Activated naive CD4-positive, alpha-beta T cell treated with anti-CD3 and anti-CD28 coated beads, Interleukin-2, amount 10 ng/mL, durations not matched to agents 7 days and 5 days (primary cell): ENCODE measurements at regions of chr2 and their contacts with region 1.

Region 1: GRCh38 chr2:204145263-204145751 is 208.7 kb downstream of the ICOS start:
- DNase-seq: peak; percentile 84
- H3K4me3 Mint-ChIP-seq: peak overlapping the region; percentile 75
- H3K27ac Mint-ChIP-seq: peak overlapping the region; percentile 77
- H3K4me1 Mint-ChIP-seq: peaks cover 12% of the 10 kb centered on the region
- H3K27me3 Mint-ChIP-seq: peaks cover 26% of the 10 kb centered on the region

Region 2: GRCh38 chr2:204108330-204108751 is 37.0 kb before region 1 on chr2:
- CTCF ChIA-PET with region 1: interaction called, 14 read pairs
- DNase-seq: peak; percentile 57
- H3K4me3 Mint-ChIP-seq: peak overlapping the region; percentile 59
- H3K27ac Mint-ChIP-seq: peak overlapping the region; percentile 84
- H3K4me1 Mint-ChIP-seq: peaks cover 78% of the 10 kb centered on the region
- H3K27me3 Mint-ChIP-seq: peaks cover 9% of the 10 kb centered on the region

Region 3: DNA sequence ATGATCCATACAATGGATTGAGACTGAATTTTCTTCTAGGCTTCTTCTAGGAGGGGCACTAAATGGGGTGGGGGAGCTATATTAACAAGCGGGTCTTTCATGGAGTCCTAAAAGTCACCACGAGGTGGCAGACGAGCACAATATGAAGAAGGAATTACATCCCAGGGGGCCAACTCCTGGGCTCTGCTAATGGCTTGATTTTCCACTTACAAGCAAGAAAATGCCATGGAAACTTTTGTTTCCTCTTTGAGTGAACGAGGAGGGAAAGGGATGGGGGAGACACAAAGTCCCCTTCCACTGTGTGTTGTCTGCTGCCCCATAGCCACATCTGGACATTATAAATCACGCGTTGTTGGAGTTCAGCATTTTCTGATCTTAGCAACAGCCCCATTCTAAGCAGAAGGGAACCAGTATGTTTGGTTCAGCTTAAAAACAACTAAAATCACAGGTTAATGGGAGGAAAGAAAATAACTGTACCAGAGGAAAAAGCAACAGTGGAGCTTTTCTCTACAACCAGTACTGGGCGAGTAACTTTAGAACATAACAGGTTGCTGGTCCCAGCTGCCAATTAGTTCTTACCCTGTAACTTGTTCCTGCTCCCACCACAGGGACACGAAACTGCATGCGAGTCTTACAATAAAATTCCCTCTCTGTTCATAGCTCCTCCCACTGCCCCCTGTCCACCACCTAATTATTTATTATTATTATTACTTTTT is 115.0 kb after region 1 on chr2:
- CTCF ChIA-PET with region 1: interaction called, 22 read pairs
- DNase-seq: peak; percentile 68
- H3K4me3 Mint-ChIP-seq: no peak overlapping the region
- H3K27ac Mint-ChIP-seq: no peak overlapping the region
- H3K4me1 Mint-ChIP-seq: no peaks in the 10 kb centered on the region
- H3K27me3 Mint-ChIP-seq: peaks cover 41% of the 10 kb centered on the region